ENCODE measurements at regions of chr15 and their contacts with region 1.

Region 1: GRCh38 chr15:64634576-64635498 is 140.6 kb downstream of the RBPMS2 start:
- DNase-seq: peak; percentile 91
- ATAC-seq: peak; percentile 81
- H3K4me3 ChIP-seq: peak overlapping the region; percentile 41; the same call in 1 of the 2 replicates
- H3K27ac ChIP-seq: peak overlapping the region; percentile 97
- H3K4me1 ChIP-seq: peaks cover 45% of the 10 kb centered on the region
- H3K27me3 ChIP-seq: no peaks in the 10 kb centered on the region
- CTCF ChIP-seq: no peak
- EP300 ChIP-seq: peak; percentile 92 to 96
- POLR2A ChIP-seq: no peak
- RAD21 ChIP-seq: no peak

Region 2: GRCh38 chr15:63749330-63749942 is 885.4 kb before region 1 on chr15:
- CTCF ChIA-PET with region 1: no interaction called
- POLR2A ChIA-PET with region 1: no interaction called
- RAD21 ChIA-PET with region 1: no interaction called
- SMC1A ChIA-PET with region 1: no interaction called
- in situ Hi-C with region 1: no loop called
- intact Hi-C with region 1: no loop called
- DNase-seq: no peak
- ATAC-seq: peak; percentile 44; the same call in 1 of the 3 replicates
- H3K4me3 ChIP-seq: no peak overlapping the region
- H3K27ac ChIP-seq: no peak overlapping the region
- H3K4me1 ChIP-seq: no peaks in the 10 kb centered on the region
- H3K27me3 ChIP-seq: no peaks in the 10 kb centered on the region
- CTCF ChIP-seq: no peak
- EP300 ChIP-seq: no peak
- POLR2A ChIP-seq: no peak
- RAD21 ChIP-seq: no peak

Region 3: DNA sequence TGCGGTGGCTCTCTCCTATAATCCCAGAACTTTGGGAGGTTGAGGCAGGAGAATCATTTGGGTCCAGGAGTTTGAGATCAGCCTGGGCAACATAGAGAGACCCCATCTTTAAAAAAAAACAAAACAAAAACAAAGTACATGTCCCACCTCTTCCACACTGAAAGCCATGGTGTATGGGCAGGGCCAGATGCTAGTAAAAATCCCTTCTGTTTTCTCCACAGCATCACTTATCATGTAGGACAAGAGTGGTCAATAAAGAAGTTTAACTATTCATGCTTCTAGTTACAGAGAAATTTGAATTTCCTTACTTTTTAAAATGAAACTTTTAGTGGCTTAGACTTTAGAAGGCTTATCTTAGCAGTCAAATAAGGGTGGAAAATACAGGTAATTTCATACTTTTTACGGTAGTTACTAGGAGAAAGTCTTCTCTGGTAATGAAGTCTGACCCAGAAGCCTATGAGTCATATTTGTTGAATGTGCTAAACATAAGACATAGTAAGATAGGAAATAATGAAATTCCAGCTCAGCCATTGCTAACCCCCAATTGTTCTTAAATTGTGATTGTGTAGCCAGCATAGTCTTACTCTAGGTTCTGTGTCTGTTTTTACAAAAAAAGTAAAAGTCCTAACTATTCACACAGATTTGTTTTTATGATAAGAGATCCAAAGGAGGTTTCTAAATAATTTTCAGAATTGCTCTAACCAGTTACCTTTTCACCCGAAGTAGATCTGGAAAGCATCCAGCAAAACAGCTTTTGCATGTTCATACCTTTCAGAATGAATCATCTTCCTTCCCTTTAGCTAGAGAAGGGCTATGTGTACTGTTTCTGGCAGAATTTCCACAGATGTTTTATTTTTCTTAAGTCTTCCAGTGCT is 190.9 kb before region 1 on chr15:
- CTCF ChIA-PET with region 1: interaction called, 4 read pairs
- POLR2A ChIA-PET with region 1: interaction called, 9 read pairs
- RAD21 ChIA-PET with region 1: interaction called, 24 read pairs
- SMC1A ChIA-PET with region 1: interaction called, 9 read pairs
- in situ Hi-C with region 1: no loop called
- intact Hi-C with region 1: no loop called
- DNase-seq: no peak
- ATAC-seq: peak; percentile 78
- H3K4me3 ChIP-seq: peak overlapping the region; percentile 34; the same call in 1 of the 2 replicates
- H3K27ac ChIP-seq: peak overlapping the region; percentile 81
- H3K4me1 ChIP-seq: peaks cover 38% of the 10 kb centered on the region
- H3K27me3 ChIP-seq: no peaks in the 10 kb centered on the region
- CTCF ChIP-seq: no peak
- EP300 ChIP-seq: peak in 1 of 2 experiments; percentile 56; a peak in 1 of 4 replicates
- POLR2A ChIP-seq: no peak
- RAD21 ChIP-seq: 0 out of 2 replicates have a peak, but pooled peaks have one; percentile 20

Region 4: GRCh38 chr15:64507293-64507802 is 127.5 kb before region 1 on chr15:
- CTCF ChIA-PET with region 1: interaction called, 9 read pairs
- POLR2A ChIA-PET with region 1: interaction called, 15 read pairs
- RAD21 ChIA-PET with region 1: interaction called, 45 read pairs
- SMC1A ChIA-PET with region 1: interaction called, 32 read pairs
- in situ Hi-C with region 1: no loop called
- intact Hi-C with region 1: no loop called
- DNase-seq: peak; percentile 48
- ATAC-seq: peak; percentile 93
- H3K4me3 ChIP-seq: no peak overlapping the region
- H3K27ac ChIP-seq: peak overlapping the region; percentile 76
- H3K4me1 ChIP-seq: peaks cover 30% of the 10 kb centered on the region
- H3K27me3 ChIP-seq: no peaks in the 10 kb centered on the region
- CTCF ChIP-seq: no peak
- EP300 ChIP-seq: 0 out of 4 replicates have a peak, but pooled peaks of 1 of the 2 experiments have one; percentile 8
- POLR2A ChIP-seq: no peak
- RAD21 ChIP-seq: no peak

Region 5: GRCh38 chr15:64571857-64572291 is 63.0 kb before region 1 on chr15:
- CTCF ChIA-PET with region 1: interaction called, 5 read pairs
- POLR2A ChIA-PET with region 1: interaction called, 3 read pairs
- RAD21 ChIA-PET with region 1: interaction called, 61 read pairs
- SMC1A ChIA-PET with region 1: interaction called, 53 read pairs
- in situ Hi-C with region 1: no loop called
- intact Hi-C with region 1: no loop called
- DNase-seq: peak; percentile 92
- ATAC-seq: peak; percentile 83
- H3K4me3 ChIP-seq: no peak overlapping the region
- H3K27ac ChIP-seq: peak overlapping the region; percentile 75
- H3K4me1 ChIP-seq: peaks cover 43% of the 10 kb centered on the region
- H3K27me3 ChIP-seq: no peaks in the 10 kb centered on the region
- CTCF ChIP-seq: no peak
- EP300 ChIP-seq: 0 out of 4 replicates have a peak, but pooled peaks of 1 of the 2 experiments have one; percentile 29
- POLR2A ChIP-seq: no peak
- RAD21 ChIP-seq: no peak

Region 6: GRCh38 chr15:64645995-64646394 is 11.2 kb after region 1 on chr15:
- CTCF ChIA-PET with region 1: interaction called, 93 read pairs
- POLR2A ChIA-PET with region 1: interaction called, 63 read pairs
- RAD21 ChIA-PET with region 1: interaction called, 239 read pairs
- SMC1A ChIA-PET with region 1: interaction called, 234 read pairs
- in situ Hi-C with region 1: no loop called
- intact Hi-C with region 1: loop called (anchors 1 kb)
- DNase-seq: no peak
- ATAC-seq: no peak
- H3K4me3 ChIP-seq: no peak overlapping the region
- H3K27ac ChIP-seq: no peak overlapping the region
- H3K4me1 ChIP-seq: peaks cover 18% of the 10 kb centered on the region
- H3K27me3 ChIP-seq: no peaks in the 10 kb centered on the region
- CTCF ChIP-seq: no peak
- EP300 ChIP-seq: no peak
- POLR2A ChIP-seq: no peak
- RAD21 ChIP-seq: no peak

Region 7: GRCh38 chr15:64681424-64682024 is 46.7 kb after region 1 on chr15:
- CTCF ChIA-PET with region 1: interaction called, 4 read pairs
- POLR2A ChIA-PET with region 1: interaction called, 7 read pairs
- RAD21 ChIA-PET with region 1: interaction called, 17 read pairs
- SMC1A ChIA-PET with region 1: interaction called, 9 read pairs
- in situ Hi-C with region 1: no loop called
- intact Hi-C with region 1: no loop called
- DNase-seq: no peak
- ATAC-seq: peak; percentile 80
- H3K4me3 ChIP-seq: no peak overlapping the region
- H3K27ac ChIP-seq: no peak overlapping the region
- H3K4me1 ChIP-seq: no peaks in the 10 kb centered on the region
- H3K27me3 ChIP-seq: no peaks in the 10 kb centered on the region
- CTCF ChIP-seq: peak; percentile 47 to 82 (median 51); a peak in 4 of 6 replicates
- EP300 ChIP-seq: no peak
- POLR2A ChIP-seq: no peak
- RAD21 ChIP-seq: peak; percentile 70

Region 8: DNA sequence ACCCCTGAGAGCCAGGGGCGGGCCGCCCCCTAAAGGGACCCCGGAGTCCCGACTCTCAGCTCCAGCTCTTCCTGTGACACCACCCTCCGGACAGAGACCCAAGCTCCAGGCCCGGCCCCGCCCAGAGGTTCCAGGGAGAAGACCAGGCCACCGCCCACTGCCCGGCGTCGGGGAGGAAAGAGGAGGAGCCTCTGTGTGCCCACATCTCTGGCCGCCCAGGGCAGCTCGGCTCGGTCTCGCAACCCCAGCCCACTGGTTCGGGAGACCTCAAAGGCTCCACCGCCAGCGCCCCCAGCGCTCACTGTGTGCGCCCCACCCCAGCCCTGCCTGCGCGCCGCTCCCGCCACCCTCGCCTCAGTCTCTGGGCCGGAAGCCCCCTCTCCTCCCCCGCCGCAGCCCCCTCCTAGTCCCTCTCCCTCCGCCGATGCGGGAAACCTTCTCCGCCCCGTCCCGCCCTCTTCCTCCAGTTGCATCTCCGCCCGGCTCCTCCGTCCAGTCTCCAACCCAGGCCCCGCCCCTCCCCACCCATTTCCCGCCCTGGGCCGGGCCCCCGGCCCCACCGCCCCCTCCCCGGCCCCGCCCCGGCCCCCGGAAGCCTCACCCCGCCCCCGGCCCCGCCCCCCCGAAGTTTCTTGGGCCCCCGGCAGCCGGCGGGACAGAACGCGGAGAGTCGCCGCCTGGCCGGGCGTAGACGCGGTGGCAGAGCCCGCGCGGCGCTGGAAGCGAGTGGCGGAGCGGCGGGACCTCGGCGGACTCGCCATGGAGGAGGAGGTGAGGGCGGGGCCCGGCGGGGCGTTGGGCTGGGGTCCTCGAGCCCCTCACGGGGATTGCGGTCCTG is 206.6 kb after region 1 on chr15 and contains the start of gene PLEKHO2:
- CTCF ChIA-PET with region 1: no interaction called
- POLR2A ChIA-PET with region 1: no interaction called
- RAD21 ChIA-PET with region 1: no interaction called
- SMC1A ChIA-PET with region 1: no interaction called
- in situ Hi-C with region 1: no loop called
- intact Hi-C with region 1: no loop called
- DNase-seq: peak; percentile 53
- ATAC-seq: peak; percentile 75
- H3K4me3 ChIP-seq: peak within 1 kb of the TSS; percentile 99
- H3K27ac ChIP-seq: peak within 1 kb of the TSS; percentile 67
- H3K4me1 ChIP-seq: peaks cover 12% of the 10 kb centered on the region
- H3K27me3 ChIP-seq: no peaks in the 10 kb centered on the region
- CTCF ChIP-seq: peak; percentile 6 to 41 (median 11); a peak in 2 of 6 replicates
- EP300 ChIP-seq: no peak
- POLR2A ChIP-seq: peak; percentile 96
- RAD21 ChIP-seq: no peak
- polyA plus RNA-seq, gene PLEKHO2: 1.4 to 3.1 TPM

Region 9: DNA sequence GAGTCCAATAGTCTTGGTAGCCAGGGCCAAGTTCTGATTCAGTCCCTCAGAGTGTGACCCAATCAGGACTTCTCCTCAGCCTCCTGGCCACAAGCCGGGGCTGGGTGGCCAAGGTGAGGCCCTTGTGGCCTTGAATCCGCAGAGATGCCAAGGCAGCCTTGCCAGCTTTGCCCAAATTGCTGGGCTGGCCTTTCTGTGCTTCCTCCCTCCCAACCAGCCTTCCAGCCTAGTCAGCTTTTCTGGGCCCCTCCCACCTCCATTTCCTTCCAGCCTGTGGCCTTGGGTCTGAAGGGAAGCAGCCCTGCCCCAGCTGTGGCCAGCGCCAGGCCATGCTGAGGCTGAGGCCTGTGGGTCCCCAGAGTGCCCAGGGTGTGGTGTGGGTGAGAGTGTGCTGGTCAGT is 242.6 kb after region 1 on chr15:
- CTCF ChIA-PET with region 1: no interaction called
- POLR2A ChIA-PET with region 1: no interaction called
- RAD21 ChIA-PET with region 1: no interaction called
- SMC1A ChIA-PET with region 1: no interaction called
- in situ Hi-C with region 1: no loop called
- intact Hi-C with region 1: no loop called
- DNase-seq: no peak
- ATAC-seq: no peak; the same call in 2 of the 3 replicates
- H3K4me3 ChIP-seq: no peak overlapping the region
- H3K27ac ChIP-seq: no peak overlapping the region
- H3K4me1 ChIP-seq: peaks cover 23% of the 10 kb centered on the region
- H3K27me3 ChIP-seq: no peaks in the 10 kb centered on the region
- CTCF ChIP-seq: no peak
- EP300 ChIP-seq: no peak
- POLR2A ChIP-seq: no peak
- RAD21 ChIP-seq: no peak

Measured in GM12878 (cell line).